Activated naive CD4-positive, alpha-beta T cell treated with anti-CD3 and anti-CD28 coated beads for 36 hours (primary cell): ENCODE measurements at regions of chr7 and their contacts with region 1.

Region 1: GRCh38 chr7:121366852-121367431 is 29.2 kb downstream of the FAM3C start:
- DNase-seq: peak; percentile 43
- H3K4me3 Mint-ChIP-seq: no peak overlapping the region
- H3K27ac Mint-ChIP-seq: no peak overlapping the region
- H3K4me1 Mint-ChIP-seq: peaks cover 13% of the 10 kb centered on the region
- H3K27me3 Mint-ChIP-seq: no peaks in the 10 kb centered on the region

Region 2: DNA sequence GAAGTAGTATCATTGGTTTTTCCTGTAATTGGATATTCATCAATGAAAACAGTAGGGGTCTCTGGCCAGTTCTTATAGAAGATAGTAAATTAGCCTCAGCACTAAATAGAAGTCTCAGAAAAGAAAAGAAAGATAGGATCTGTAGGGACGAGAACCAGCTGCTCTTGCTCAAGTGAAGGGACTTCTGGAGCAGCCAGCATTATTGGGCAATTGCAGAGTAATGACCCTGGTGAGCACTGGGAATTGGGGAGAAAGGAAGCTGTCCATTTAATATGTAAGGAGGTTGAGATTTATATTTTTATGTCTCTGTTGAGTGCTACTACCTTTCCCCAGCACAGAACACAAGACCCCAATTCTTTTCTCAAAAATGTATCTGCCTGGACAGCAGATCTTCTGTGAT is 99.3 kb before region 1 on chr7:
- CTCF ChIA-PET with region 1: no interaction called
- intact Hi-C with region 1: no loop called
- DNase-seq: no peak
- H3K4me3 Mint-ChIP-seq: no peak overlapping the region
- H3K27ac Mint-ChIP-seq: no peak overlapping the region
- H3K4me1 Mint-ChIP-seq: no peaks in the 10 kb centered on the region
- H3K27me3 Mint-ChIP-seq: peaks cover 13% of the 10 kb centered on the region

Region 3: DNA sequence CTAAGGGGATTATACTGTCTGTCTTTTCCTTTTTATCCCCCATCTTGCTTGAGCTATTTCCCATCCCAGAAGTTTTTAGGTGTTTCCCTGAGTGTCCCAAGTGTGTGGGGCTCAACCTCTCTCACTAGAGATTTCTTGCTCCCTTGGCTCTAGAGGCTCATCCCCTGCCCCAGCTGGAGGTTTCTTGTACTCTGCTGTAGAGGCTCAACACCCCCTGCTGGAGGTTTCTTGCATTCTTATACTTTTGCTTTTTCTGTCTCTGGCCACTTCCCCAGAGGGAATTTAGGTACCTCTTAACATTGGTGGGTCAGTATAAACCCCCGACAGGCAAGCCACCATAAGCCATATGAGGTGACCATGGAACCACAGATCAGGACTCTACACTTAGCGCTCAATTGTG is 143.4 kb after region 1 on chr7:
- CTCF ChIA-PET with region 1: interaction called, 3 read pairs
- intact Hi-C with region 1: loop called (anchors 1 kb)
- DNase-seq: no peak
- H3K4me3 Mint-ChIP-seq: no peak overlapping the region
- H3K27ac Mint-ChIP-seq: no peak overlapping the region
- H3K4me1 Mint-ChIP-seq: no peaks in the 10 kb centered on the region
- H3K27me3 Mint-ChIP-seq: peaks cover 6% of the 10 kb centered on the region